ENCODE measurements at regions of chr12 and their contacts with region 1.

Region 1: DNA sequence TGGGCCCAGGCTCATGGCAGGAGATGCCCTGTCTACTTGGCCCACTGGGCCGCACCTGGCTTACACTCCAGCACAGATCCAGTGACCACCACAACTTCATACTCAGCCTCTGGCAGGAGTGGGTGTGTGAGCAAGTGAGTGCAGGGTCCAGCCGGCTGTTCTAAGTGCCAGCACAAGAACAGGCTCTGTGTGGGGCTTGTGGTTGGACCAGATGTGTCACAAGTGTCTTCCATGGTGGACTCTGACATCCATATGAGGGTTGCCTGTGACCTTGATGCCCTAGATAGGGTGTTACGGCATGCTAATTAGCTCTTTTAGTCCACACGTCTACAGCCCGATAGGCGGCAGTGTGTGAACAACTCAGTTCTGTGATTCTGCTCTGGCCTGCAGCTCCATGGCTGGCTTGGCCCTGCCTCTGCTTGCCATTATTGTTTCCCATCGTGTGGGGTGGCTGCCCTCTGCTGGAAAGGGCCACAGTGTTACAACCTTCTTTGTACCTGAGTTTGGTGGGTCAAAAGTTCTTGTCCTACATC is 1089.1 kb downstream of the SLC6A15 start:
- DNase-seq: no peak
- H3K4me3 ChIP-seq: no peak overlapping the region
- CTCF ChIP-seq: peak; percentile 2

Region 2: GRCh38 chr12:83603106-83603505 is 220.4 kb before region 1 on chr12:
- CTCF ChIA-PET with region 1: no interaction called
- POLR2A ChIA-PET with region 1: no interaction called
- DNase-seq: no peak
- H3K4me3 ChIP-seq: no peak overlapping the region
- CTCF ChIP-seq: no peak

Region 3: DNA sequence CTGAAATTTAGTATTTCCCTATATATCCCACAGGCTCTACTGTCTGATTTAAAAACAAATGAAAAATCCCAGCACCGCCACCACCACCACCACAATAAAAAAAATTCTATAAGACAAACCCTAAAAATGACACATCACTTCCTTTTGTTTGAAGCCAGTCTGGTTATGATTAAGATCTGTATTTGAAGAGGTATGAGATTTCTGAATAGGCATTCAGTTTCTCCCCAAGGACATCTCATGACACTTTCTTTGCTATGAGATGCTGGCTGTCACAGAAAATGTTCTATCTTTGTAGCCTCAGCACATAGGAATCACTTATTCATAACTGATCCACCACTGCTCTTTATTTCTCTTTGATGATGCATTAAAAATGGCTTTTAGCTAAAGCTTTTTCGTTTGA is 18.1 kb after region 1 on chr12:
- CTCF ChIA-PET with region 1: interaction called, 13 read pairs
- POLR2A ChIA-PET with region 1: no interaction called
- DNase-seq: no peak
- H3K4me3 ChIP-seq: no peak overlapping the region
- CTCF ChIP-seq: no peak

Region 4: DNA sequence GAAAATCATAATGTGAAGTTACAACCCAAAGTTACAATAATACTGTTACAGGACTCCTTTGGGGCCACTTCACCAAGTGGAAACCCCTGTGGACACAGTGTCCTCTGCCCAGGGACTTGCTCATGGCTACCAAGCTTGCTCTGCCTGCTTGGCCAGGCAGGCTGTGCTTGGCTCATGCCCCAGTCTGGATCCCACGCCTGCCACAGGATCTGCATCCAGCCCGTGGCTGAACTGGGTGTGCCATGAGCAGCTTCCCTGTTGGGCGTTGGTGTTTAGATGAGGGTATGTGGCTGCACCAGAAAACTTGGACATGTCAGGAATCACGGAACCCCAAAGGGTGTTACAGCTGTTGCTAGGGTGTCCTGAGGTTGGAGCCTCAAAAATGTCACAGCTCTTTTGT is 268.2 kb after region 1 on chr12:
- CTCF ChIA-PET with region 1: no interaction called
- POLR2A ChIA-PET with region 1: no interaction called
- DNase-seq: no peak
- H3K4me3 ChIP-seq: no peak overlapping the region
- CTCF ChIP-seq: no peak

Region 5: DNA sequence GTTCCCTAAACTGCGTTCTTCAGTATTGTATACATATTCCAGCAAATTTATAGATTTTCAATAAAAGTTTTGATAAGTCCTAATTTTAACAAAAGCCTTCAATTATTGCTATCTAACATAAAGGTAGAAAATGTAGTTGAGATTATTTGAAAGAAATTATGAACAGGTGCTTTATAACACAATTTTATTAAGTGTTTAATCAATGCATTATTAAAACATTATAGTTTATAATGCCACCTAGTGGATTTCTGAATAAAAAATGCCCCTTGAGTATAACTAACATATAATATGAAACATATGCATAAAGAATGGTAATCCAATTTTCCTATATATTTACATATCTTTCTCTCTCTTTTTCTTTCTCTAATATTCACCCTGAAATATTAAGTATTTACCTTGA is 573.8 kb after region 1 on chr12:
- CTCF ChIA-PET with region 1: interaction called, 39 read pairs
- POLR2A ChIA-PET with region 1: no interaction called
- DNase-seq: no peak
- H3K4me3 ChIP-seq: no peak overlapping the region
- CTCF ChIP-seq: no peak

Region 6: DNA sequence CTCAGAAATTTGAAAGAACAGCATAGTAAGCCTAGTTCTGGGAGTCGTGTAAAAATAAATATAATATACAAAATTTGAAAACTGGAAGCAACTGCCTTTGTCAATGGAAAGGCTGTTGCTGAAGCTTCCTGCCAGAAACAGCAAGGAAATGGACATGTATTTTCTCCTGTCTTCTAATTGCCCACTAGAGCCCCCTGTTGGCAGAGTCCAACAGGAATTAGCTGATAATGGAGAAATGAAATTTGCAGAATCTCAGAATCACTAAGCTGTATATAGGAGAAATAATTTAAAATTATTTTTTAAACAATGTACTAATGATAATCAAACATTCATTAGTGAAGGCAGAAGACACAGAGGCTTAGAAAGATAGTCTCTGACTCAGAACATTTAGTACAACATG is 674.3 kb after region 1 on chr12:
- CTCF ChIA-PET with region 1: interaction called, 17 read pairs
- POLR2A ChIA-PET with region 1: no interaction called
- DNase-seq: no peak
- H3K4me3 ChIP-seq: no peak overlapping the region
- CTCF ChIP-seq: peak; percentile 33

Measured in AG04449 (cell line).